CD8-positive, alpha-beta T cell (primary cell): ENCODE measurements at regions of chr1 and their contacts with region 1.

Region 1: GRCh38 chr1:151024540-151025146 is 11.7 kb upstream of the BNIPL start:
- DNase-seq: peak; percentile 77 to 94 (median 89)
- ATAC-seq: peak; percentile 100
- H3K4me3 ChIP-seq: peak overlapping the region in 1 of 2 experiments; percentile 40
- H3K4me3 Mint-ChIP-seq: peak overlapping the region; percentile 58
- H3K27ac ChIP-seq: no peak overlapping the region
- H3K27ac Mint-ChIP-seq: no peak overlapping the region
- H3K4me1 ChIP-seq: peaks cover 7% of the 10 kb centered on the region
- H3K4me1 Mint-ChIP-seq: peaks cover 7% of the 10 kb centered on the region
- H3K27me3 ChIP-seq: no peaks in the 10 kb centered on the region
- H3K27me3 Mint-ChIP-seq: no peaks in the 10 kb centered on the region
- CTCF ChIP-seq: peak; percentile 77

Region 2: DNA sequence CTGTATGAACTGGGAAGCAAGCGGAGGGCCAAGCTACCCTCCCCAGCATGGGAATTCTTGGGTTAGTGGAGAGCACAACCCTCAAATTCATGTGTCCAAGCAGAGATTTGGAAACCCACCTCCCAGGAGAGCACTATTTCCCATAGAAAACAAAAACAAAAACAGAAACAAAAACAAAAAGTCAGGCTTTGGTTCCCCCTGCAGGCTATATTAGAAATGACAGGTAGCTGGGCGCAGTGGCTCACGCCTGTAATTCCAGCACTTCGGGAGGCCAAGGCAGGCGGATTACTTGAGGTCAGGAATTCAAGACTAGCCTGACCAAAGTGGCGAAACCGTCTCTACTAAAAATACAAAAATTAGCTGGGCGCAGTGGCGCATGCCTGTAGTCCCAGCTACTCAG is 28.7 kb before region 1 on chr1:
- CTCF ChIA-PET with region 1: interaction called, 10 read pairs
- POLR2A ChIA-PET with region 1: no interaction called
- intact Hi-C with region 1: no loop called
- DNase-seq: peak in 4 of 9 experiments; percentile 29 to 65 (median 44)
- ATAC-seq: peak; percentile 64
- H3K4me3 ChIP-seq: no peak overlapping the region
- H3K4me3 Mint-ChIP-seq: no peak overlapping the region
- H3K27ac ChIP-seq: no peak overlapping the region
- H3K27ac Mint-ChIP-seq: no peak overlapping the region
- H3K4me1 ChIP-seq: no peaks in the 10 kb centered on the region
- H3K4me1 Mint-ChIP-seq: peaks cover 8% of the 10 kb centered on the region
- H3K27me3 ChIP-seq: no peaks in the 10 kb centered on the region
- H3K27me3 Mint-ChIP-seq: no peaks in the 10 kb centered on the region
- CTCF ChIP-seq: peak; percentile 95

Region 3: GRCh38 chr1:151047925-151048645 is 23.4 kb after region 1 on chr1:
- CTCF ChIA-PET with region 1: interaction called, 99 read pairs
- POLR2A ChIA-PET with region 1: interaction called, 6 read pairs
- intact Hi-C with region 1: loop called (anchors 1 kb)
- DNase-seq: peak in 8 of 9 experiments; percentile 43 to 86 (median 67)
- ATAC-seq: peak; percentile 81
- H3K4me3 ChIP-seq: peak overlapping the region; percentile 89 to 98
- H3K4me3 Mint-ChIP-seq: peak overlapping the region; percentile 91
- H3K27ac ChIP-seq: peak overlapping the region; percentile 53 to 88
- H3K27ac Mint-ChIP-seq: peak overlapping the region; percentile 91
- H3K4me1 ChIP-seq: peaks cover 39% of the 10 kb centered on the region
- H3K4me1 Mint-ChIP-seq: peaks cover 64% of the 10 kb centered on the region
- H3K27me3 ChIP-seq: no peaks in the 10 kb centered on the region
- H3K27me3 Mint-ChIP-seq: no peaks in the 10 kb centered on the region
- CTCF ChIP-seq: peak; percentile 51

Region 4: DNA sequence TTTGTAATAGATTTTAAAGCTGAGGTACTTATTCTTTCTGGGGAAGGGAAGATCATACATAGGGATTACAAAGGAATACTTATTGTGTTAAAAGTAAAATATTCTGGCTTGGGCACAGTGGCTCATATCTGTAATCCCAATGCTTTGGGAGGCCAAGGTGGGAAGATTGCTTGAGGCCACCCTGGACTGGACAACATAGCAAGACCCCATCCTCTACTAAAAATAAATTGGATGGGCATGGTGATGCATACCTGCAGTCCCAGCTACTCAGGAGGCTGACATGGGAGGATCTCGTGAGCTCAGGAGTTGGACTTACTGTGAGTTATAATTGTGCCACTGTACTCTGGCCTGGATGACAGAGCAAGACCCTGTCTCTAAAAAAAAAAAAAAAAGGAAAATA is 73.5 kb after region 1 on chr1:
- CTCF ChIA-PET with region 1: interaction called, 52 read pairs
- POLR2A ChIA-PET with region 1: interaction called, 7 read pairs
- intact Hi-C with region 1: loop called (anchors 1 to 2 kb)
- DNase-seq: no peak
- ATAC-seq: no peak
- H3K4me3 ChIP-seq: no peak overlapping the region
- H3K4me3 Mint-ChIP-seq: no peak overlapping the region
- H3K27ac ChIP-seq: no peak overlapping the region
- H3K27ac Mint-ChIP-seq: no peak overlapping the region
- H3K4me1 ChIP-seq: no peaks in the 10 kb centered on the region
- H3K4me1 Mint-ChIP-seq: no peaks in the 10 kb centered on the region
- H3K27me3 ChIP-seq: no peaks in the 10 kb centered on the region
- H3K27me3 Mint-ChIP-seq: no peaks in the 10 kb centered on the region
- CTCF ChIP-seq: no peak

Region 5: DNA sequence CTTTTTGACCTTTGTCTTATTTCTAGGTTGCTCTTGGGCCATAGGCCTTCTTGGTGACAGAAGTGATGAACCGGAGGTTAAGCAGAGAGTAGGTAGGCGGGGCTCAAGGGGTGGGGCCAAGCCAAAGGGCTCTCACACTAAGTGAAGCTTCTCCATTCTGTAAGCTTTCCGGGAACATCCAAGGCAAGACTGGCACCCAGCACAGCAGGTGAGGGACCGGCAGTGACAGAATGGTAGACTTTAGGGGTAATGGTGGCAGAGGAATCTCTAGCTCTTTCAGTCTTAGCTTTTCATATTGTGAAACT is 131.8 kb after region 1 on chr1 and contains the start of gene TNFAIP8L2:
- CTCF ChIA-PET with region 1: interaction called, 40 read pairs
- POLR2A ChIA-PET with region 1: interaction called, 4 read pairs
- intact Hi-C with region 1: loop called (anchors 1 kb)
- DNase-seq: peak; percentile 45 to 86 (median 74)
- ATAC-seq: peak; percentile 83
- H3K4me3 ChIP-seq: peak within 1 kb of the TSS; percentile 83 to 89
- H3K4me3 Mint-ChIP-seq: peak within 1 kb of the TSS; percentile 97
- H3K27ac ChIP-seq: peak within 1 kb of the TSS; percentile 55 to 70
- H3K27ac Mint-ChIP-seq: peak within 1 kb of the TSS; percentile 92
- H3K4me1 ChIP-seq: peaks cover 35% of the 10 kb centered on the region
- H3K4me1 Mint-ChIP-seq: peaks cover 55% of the 10 kb centered on the region
- H3K27me3 ChIP-seq: no peaks in the 10 kb centered on the region
- H3K27me3 Mint-ChIP-seq: no peaks in the 10 kb centered on the region
- CTCF ChIP-seq: no peak
- total RNA-seq, gene TNFAIP8L2: 0.62 to 0.86 TPM

Region 6: DNA sequence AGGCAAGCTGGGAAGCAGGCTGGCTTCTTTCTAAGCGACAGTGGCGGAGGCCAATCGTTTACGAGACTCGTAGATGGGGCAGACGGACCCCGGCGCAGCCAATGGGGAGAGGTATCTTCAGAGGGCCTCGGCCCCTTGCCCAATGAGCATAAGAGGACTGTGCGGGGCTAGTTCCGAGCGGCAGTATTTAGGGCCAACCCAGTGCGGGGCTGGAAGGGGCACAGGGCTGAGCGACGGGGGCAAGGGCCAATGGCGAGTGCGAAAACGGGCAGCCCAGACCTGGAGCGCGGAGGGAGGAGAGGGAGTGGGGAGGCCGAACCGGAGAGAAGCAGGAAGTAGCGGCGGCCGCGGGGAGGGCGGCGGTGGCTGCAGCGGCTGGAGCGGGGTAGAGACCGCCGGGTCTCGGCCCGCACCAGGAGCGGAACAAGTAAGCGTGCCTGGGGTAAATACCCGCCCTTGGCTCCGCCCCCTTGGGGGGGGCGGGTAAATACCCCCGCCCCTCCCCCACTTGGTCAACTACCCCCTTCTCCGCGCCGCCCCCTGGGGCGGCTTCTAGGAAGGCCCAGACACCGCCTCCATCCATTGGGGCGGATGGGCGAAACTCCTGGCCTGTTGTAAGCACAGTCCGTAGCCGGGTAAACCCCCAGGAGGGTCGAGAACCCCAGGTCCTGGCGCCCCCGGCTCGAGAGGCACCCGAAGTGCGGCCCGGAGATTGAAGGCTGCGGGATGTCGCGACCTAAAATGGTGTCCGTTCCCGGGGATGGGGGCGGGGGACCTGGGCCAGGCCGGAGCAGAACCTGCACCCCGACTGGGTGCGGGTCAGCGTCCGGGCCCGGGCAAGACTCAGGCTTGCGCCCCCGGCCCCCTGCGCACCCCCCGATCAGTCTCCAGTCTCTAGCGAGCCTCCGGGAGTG is 257.6 kb after region 1 on chr1 and contains the start of gene ZNF687:
- CTCF ChIA-PET with region 1: no interaction called
- POLR2A ChIA-PET with region 1: no interaction called
- intact Hi-C with region 1: no loop called
- DNase-seq: peak; percentile 95 to 100 (median 98)
- ATAC-seq: peak; percentile 84
- H3K4me3 ChIP-seq: peak within 1 kb of the TSS; percentile 72 to 89
- H3K4me3 Mint-ChIP-seq: peak within 1 kb of the TSS; percentile 99
- H3K27ac ChIP-seq: peak within 1 kb of the TSS; percentile 91 to 94
- H3K27ac Mint-ChIP-seq: peak within 1 kb of the TSS; percentile 98
- H3K4me1 ChIP-seq: peaks cover 21% of the 10 kb centered on the region
- H3K4me1 Mint-ChIP-seq: peaks cover 28% of the 10 kb centered on the region
- H3K27me3 ChIP-seq: no peaks in the 10 kb centered on the region
- H3K27me3 Mint-ChIP-seq: no peaks in the 10 kb centered on the region
- CTCF ChIP-seq: no peak
- total RNA-seq, gene ZNF687: 34.0 to 36.3 TPM